Left ventricle myocardium superior (tissue), 1 donor: ENCODE measurements at regions of chr5 and their contacts with region 1.

Region 1: DNA sequence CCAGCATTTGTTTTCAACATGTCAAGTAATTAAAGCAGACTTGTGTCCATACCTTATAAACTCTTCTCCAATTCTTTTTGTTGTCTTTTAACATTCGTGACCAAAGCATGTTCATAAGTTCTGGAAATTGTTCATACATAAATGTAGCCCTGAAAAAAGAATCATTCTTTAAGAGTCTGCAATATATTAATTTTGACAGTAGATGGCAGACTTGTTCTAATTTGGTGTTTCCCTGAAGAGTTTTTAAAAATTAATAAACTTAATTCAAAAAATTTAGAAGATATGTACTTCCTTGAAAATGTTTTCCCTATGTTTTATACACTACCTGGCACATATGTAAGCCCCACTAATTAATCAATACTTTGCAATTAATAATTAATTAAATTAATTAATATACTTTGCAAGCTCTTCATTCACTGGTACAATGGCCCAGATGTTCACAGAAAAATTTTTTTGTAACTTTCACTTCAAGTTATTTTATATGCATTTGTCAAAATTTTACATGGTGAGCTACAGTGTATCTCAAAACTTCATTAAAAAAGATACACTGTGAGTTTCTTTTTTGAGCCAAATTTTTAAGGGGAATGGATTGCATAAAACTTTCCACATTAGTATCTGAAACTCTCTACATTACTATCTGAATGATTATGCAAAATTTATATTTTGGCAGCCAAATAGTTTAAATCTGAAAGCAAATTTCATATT is 42.1 kb downstream of the CLINT1 start:
- DNase-seq: no peak
- ATAC-seq: no peak

Region 2: DNA sequence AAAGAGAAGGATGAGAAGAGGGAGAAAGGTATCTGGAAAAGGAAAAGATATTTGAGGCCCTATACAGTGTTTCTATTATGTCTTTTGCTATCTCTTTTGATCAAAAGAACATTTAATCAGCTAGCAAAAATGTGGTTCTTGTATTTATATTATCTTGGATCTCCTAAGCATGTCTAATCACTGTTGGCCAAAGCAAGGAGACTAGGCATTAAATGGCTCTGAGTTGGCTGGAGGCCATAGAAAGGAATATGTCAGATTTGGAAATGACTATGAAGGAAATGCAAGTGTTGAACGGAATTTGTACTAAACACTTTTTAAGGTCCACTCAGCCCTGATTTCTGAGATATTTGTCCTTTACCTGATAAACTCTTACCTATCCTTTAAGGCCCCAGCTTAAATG is 108.0 kb before region 1 on chr5:
- intact Hi-C with region 1: no loop called
- DNase-seq: no peak
- ATAC-seq: no peak

Region 3: DNA sequence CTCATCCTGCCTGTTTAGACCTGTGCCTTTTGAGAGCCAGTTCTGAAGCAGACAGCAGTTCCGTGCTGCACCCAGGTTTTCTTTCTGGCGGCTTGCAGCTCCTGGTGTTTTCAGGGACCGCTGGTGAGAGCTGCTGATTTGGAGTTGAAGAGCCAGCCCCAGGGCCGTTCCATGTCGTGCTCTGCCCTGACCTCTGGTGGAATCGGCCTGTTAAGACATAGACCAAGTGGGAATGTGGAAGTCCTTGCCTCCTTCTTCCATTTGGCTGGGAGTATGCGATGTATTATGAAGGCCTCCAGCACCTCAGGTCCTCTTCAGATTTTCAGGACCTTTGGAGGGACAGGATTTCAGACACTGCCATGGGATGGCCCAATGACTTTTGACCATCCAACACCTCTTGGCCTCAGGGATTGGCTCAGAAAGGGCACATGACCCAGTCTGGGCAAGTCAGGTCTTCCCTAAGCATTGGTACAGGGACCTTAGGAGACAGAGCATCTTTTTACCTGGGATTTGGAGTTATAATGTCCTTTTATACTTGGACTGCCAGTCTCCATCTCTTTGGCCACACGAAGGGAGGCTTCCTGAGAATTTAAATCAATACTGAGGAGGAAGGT is 178.2 kb after region 1 on chr5:
- intact Hi-C with region 1: loop called (anchors 5 kb)
- DNase-seq: peak; percentile 71
- ATAC-seq: peak; percentile 98

Region 4: DNA sequence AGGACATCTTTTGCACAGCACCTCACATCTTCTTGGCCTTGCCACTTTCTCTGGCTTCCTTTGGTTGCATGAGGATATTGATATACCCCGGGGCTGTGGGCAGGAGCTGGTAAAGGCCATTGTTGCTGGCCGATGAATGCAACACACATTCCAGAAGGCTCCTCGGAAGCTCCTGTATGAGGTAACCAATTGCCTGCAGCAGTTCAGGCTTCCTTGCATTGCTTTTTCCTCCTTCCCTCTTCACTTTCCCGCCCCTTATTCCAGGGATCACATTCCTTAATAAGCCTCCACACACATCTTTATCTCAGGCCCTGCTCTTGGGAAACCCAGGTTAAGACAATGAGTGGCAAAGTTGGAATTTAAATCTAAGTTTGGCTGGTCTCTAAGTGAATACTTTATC is 547.5 kb after region 1 on chr5:
- intact Hi-C with region 1: no loop called
- DNase-seq: no peak
- ATAC-seq: no peak